ENCODE measurements at regions of chr2 and their contacts with region 1.

Region 1: DNA sequence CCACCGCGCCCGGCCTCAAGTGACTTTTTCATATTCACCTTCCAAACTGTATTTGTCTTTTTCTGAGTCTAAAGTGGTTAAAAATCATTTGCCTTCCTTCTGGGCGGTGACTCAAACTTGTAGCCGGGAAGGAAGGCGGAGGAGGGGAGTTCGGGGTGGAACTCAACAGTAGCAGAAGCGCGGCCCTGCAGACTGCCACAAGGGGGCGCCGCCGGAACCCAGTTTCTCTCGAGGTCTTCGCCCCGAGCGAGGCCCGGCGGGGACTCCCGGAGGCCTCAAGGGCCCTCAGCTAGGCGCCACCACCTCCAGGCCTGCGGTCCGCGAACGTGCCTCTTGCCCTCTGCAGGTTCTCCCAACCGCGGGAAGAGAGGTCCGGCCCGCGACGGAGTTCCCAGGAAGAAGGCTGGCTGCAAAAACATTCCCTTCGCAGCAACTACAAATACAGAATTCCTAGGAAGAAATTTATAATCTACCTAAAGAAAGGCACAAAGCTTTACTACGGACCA is 16.8 kb upstream of the ITM2C start:
- DNase-seq: peak; percentile 86
- ATAC-seq: peak; percentile 96
- H3K4me3 ChIP-seq: peak overlapping the region in 1 of 2 experiments; percentile 2; a peak in 1 of 4 replicates
- H3K27ac ChIP-seq: no peak overlapping the region
- H3K4me1 ChIP-seq: peaks cover 4 to 17% of the 10 kb centered on the region in 2 experiments; a peak in 3 of 4 replicates
- H3K27me3 ChIP-seq: no peaks in the 10 kb centered on the region
- CTCF ChIP-seq: peak; percentile 83 to 91 (median 87)
- POLR2A ChIP-seq: no peak
- RAD21 ChIP-seq: peak; percentile 76

Region 2: DNA sequence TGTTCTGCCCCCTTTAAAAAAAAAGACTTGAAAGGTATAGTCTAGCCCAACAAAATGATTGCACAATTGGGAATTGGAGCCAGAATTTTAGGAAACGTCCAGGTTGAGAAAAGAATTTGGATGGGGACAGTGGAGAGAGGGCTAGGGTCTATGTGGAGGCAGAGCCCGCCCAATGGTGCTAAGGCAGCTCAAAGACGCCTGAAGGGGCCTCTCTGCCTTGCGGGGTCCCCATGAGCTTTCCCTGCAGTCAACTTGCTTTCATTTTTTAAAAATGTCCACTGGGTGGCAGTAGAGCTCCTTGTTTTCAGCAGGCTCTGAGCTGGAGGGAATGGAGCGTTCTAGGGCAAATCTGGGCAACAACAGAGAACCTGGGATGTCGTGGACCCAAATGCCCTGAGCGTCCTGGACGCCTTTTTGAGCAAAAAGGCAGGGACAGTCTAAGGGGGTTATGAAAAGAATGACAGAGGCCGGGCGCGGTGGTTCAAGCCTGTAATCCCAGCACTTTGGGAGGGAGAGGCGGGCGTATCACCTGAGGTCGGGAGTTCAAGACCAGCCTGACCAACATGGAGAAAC is 23.4 kb before region 1 on chr2:
- CTCF ChIA-PET with region 1: interaction called, 11 read pairs
- POLR2A ChIA-PET with region 1: no interaction called
- RAD21 ChIA-PET with region 1: no interaction called
- intact Hi-C with region 1: no loop called
- DNase-seq: peak; percentile 77
- ATAC-seq: peak; percentile 93
- H3K4me3 ChIP-seq: peak overlapping the region in 1 of 2 experiments; percentile 13; a peak in 1 of 4 replicates
- H3K27ac ChIP-seq: no peak overlapping the region
- H3K4me1 ChIP-seq: peaks cover 0 to 3% of the 10 kb centered on the region in 2 experiments; a peak in 1 of 4 replicates
- H3K27me3 ChIP-seq: no peaks in the 10 kb centered on the region
- CTCF ChIP-seq: peak; percentile 50 to 85 (median 71)
- POLR2A ChIP-seq: no peak
- RAD21 ChIP-seq: peak; percentile 93

Region 3: GRCh38 chr2:230864598-230865306 is 16.8 kb after region 1 on chr2 and contains the start of gene ITM2C:
- CTCF ChIA-PET with region 1: interaction called, 7 read pairs
- POLR2A ChIA-PET with region 1: no interaction called
- RAD21 ChIA-PET with region 1: no interaction called
- intact Hi-C with region 1: loop called (anchors 1 kb)
- DNase-seq: peak; percentile 27
- ATAC-seq: peak; percentile 85
- H3K4me3 ChIP-seq: peak within 1 kb of the TSS; percentile 80 to 92
- H3K27ac ChIP-seq: peak within 1 kb of the TSS; percentile 66
- H3K4me1 ChIP-seq: peaks cover 24 to 34% of the 10 kb centered on the region in 2 experiments
- H3K27me3 ChIP-seq: no peaks in the 10 kb centered on the region
- CTCF ChIP-seq: peak in 2 of 3 experiments; percentile 47 to 49; a peak in 4 of 6 replicates
- POLR2A ChIP-seq: peak; percentile 57
- RAD21 ChIP-seq: no peak
- total RNA-seq, gene ITM2C: 117 TPM

Region 4: GRCh38 chr2:230913406-230914143 is 65.6 kb after region 1 on chr2:
- CTCF ChIA-PET with region 1: no interaction called
- POLR2A ChIA-PET with region 1: no interaction called
- RAD21 ChIA-PET with region 1: no interaction called
- intact Hi-C with region 1: no loop called
- DNase-seq: peak; percentile 15
- ATAC-seq: peak; percentile 68
- H3K4me3 ChIP-seq: no peak overlapping the region
- H3K27ac ChIP-seq: no peak overlapping the region
- H3K4me1 ChIP-seq: peaks cover 6 to 9% of the 10 kb centered on the region in 2 experiments; a peak in 3 of 4 replicates
- H3K27me3 ChIP-seq: no peaks in the 10 kb centered on the region
- CTCF ChIP-seq: peak; percentile 38 to 61 (median 60); a peak in 5 of 6 replicates
- POLR2A ChIP-seq: no peak
- RAD21 ChIP-seq: peak; percentile 62

Measured in HCT116 (cell line).